Activated CD4-positive, alpha-beta memory T cell treated with anti-CD3 and anti-CD28 coated beads, Interleukin-2, amount 10 ng/mL, durations not matched to agents 7 days and 5 days (primary cell): ENCODE measurements at regions of chr11 and their contacts with region 1.

Region 1: GRCh38 chr11:61792310-61793085 is at the starts of genes FEN1 and TMEM258:
- DNase-seq: peak; percentile 90
- H3K4me3 Mint-ChIP-seq: peak within 1 kb of the TSS; percentile 94
- H3K27ac Mint-ChIP-seq: peak within 1 kb of the TSS; percentile 96
- H3K4me1 Mint-ChIP-seq: peaks cover 60% of the 10 kb centered on the region
- H3K27me3 Mint-ChIP-seq: no peaks in the 10 kb centered on the region
- total RNA-seq, gene FEN1: 104 to 105 TPM
- total RNA-seq, gene TMEM258: 192 to 196 TPM

Region 2: GRCh38 chr11:61691380-61692156 is 100.9 kb before region 1 on chr11:
- CTCF ChIA-PET with region 1: no interaction called
- POLR2A ChIA-PET with region 1: no interaction called
- DNase-seq: no peak
- H3K4me3 Mint-ChIP-seq: no peak overlapping the region
- H3K27ac Mint-ChIP-seq: no peak overlapping the region
- H3K4me1 Mint-ChIP-seq: peaks cover 10% of the 10 kb centered on the region
- H3K27me3 Mint-ChIP-seq: peaks cover 11% of the 10 kb centered on the region

Region 3: GRCh38 chr11:61727401-61727811 is 65.1 kb before region 1 on chr11:
- CTCF ChIA-PET with region 1: no interaction called
- POLR2A ChIA-PET with region 1: no interaction called
- DNase-seq: no peak
- H3K4me3 Mint-ChIP-seq: no peak overlapping the region
- H3K27ac Mint-ChIP-seq: no peak overlapping the region
- H3K4me1 Mint-ChIP-seq: peaks cover 7% of the 10 kb centered on the region
- H3K27me3 Mint-ChIP-seq: no peaks in the 10 kb centered on the region

Region 4: GRCh38 chr11:61776551-61777075 is 15.9 kb before region 1 on chr11:
- CTCF ChIA-PET with region 1: interaction called, 6 read pairs
- POLR2A ChIA-PET with region 1: interaction called, 52 read pairs
- DNase-seq: peak; percentile 77
- H3K4me3 Mint-ChIP-seq: no peak overlapping the region
- H3K27ac Mint-ChIP-seq: no peak overlapping the region
- H3K4me1 Mint-ChIP-seq: peaks cover 34% of the 10 kb centered on the region
- H3K27me3 Mint-ChIP-seq: peaks cover 4% of the 10 kb centered on the region

Region 5: GRCh38 chr11:61827571-61828378 is 35.3 kb after region 1 on chr11 and contains the start of gene FADS2:
- CTCF ChIA-PET with region 1: interaction called, 6 read pairs
- POLR2A ChIA-PET with region 1: interaction called, 44 read pairs
- DNase-seq: peak; percentile 92
- H3K4me3 Mint-ChIP-seq: peak within 1 kb of the TSS; percentile 95
- H3K27ac Mint-ChIP-seq: peak within 1 kb of the TSS; percentile 91
- H3K4me1 Mint-ChIP-seq: peaks cover 46% of the 10 kb centered on the region
- H3K27me3 Mint-ChIP-seq: peaks cover 20% of the 10 kb centered on the region
- total RNA-seq, gene FADS2: 251 to 253 TPM

Region 6: DNA sequence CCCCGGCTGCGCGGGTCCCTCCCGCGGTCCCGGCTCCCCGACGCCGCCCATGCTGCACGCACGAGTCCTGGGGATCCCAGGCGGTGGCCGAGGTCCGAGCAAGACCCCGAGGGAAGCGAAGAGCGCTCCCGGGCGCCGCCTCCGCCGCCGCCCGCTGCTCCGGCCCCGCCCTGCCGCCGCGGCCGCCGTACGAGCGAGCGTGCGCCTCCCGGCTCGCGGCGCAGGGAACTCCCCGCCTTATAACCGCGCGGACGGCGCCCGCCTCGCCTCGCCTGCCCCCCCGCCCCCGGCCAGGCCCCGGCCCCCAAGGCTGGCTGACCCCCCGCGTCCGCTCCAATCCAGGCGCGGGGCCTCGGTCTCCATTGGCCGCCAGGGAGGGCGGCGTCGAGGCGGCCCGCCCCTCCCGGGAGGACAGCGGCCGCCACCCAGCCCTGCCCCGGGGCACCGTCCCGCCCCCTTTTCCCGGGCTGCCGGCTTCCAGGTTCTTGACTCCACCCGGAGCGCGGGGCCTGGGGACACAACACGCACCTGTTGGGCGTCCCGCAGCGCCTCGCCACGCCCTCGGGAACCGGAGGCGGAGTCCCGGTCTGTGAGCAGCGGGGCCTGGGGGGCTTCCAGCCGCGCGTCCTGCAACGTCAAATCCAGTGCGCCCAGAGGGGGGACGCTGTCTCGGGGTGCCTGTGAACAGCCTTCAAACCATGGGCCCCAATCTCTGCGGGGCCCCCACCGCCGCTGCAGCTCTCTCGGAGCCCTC is 99.0 kb after region 1 on chr11 and contains the start of gene FADS3:
- CTCF ChIA-PET with region 1: interaction called, 14 read pairs
- POLR2A ChIA-PET with region 1: interaction called, 5 read pairs
- DNase-seq: peak; percentile 57
- H3K4me3 Mint-ChIP-seq: peak within 1 kb of the TSS; percentile 76
- H3K27ac Mint-ChIP-seq: no peak within 1 kb of the TSS
- H3K4me1 Mint-ChIP-seq: peaks cover 2% of the 10 kb centered on the region
- H3K27me3 Mint-ChIP-seq: peaks cover 3% of the 10 kb centered on the region
- total RNA-seq, gene FADS3: 5.2 to 5.4 TPM

Region 7: GRCh38 chr11:61967116-61967923 is 174.8 kb after region 1 on chr11 and contains the start of gene FTH1:
- CTCF ChIA-PET with region 1: interaction called, 8 read pairs
- POLR2A ChIA-PET with region 1: interaction called, 42 read pairs
- DNase-seq: peak; percentile 90
- H3K4me3 Mint-ChIP-seq: peak within 1 kb of the TSS; percentile 92
- H3K27ac Mint-ChIP-seq: peak within 1 kb of the TSS; percentile 94
- H3K4me1 Mint-ChIP-seq: peaks cover 67% of the 10 kb centered on the region
- H3K27me3 Mint-ChIP-seq: no peaks in the 10 kb centered on the region
- total RNA-seq, gene FTH1: 1,164 to 1,189 TPM